CD4-positive, alpha-beta memory T cell (primary cell): ENCODE measurements at regions of chr19 and their contacts with region 1.

Region 1: GRCh38 chr19:19170053-19170872 is at the start of gene MEF2B:
- DNase-seq: peak; percentile 68 to 85 (median 73)
- H3K4me3 ChIP-seq: peak within 1 kb of the TSS in 1 of 2 donors; percentile 5
- H3K4me3 Mint-ChIP-seq: peak within 1 kb of the TSS in 7 of 8 donors; percentile 60 to 82 (median 71)
- H3K27ac ChIP-seq: no peak within 1 kb of the TSS
- H3K27ac Mint-ChIP-seq: peak within 1 kb of the TSS in 6 of 7 donors; percentile 25 to 79 (median 60)
- H3K4me1 ChIP-seq: peaks cover 14% of the 10 kb centered on the region
- H3K4me1 Mint-ChIP-seq: peaks cover 12 to 17% (median 14%) of the 10 kb centered on the region in 4 donors
- H3K27me3 ChIP-seq: no peaks in the 10 kb centered on the region
- H3K27me3 Mint-ChIP-seq: peaks cover 1% of the 10 kb centered on the region in 2 donors
- total RNA-seq, gene MEF2B: 3.1 to 5.2 TPM

Region 2: DNA sequence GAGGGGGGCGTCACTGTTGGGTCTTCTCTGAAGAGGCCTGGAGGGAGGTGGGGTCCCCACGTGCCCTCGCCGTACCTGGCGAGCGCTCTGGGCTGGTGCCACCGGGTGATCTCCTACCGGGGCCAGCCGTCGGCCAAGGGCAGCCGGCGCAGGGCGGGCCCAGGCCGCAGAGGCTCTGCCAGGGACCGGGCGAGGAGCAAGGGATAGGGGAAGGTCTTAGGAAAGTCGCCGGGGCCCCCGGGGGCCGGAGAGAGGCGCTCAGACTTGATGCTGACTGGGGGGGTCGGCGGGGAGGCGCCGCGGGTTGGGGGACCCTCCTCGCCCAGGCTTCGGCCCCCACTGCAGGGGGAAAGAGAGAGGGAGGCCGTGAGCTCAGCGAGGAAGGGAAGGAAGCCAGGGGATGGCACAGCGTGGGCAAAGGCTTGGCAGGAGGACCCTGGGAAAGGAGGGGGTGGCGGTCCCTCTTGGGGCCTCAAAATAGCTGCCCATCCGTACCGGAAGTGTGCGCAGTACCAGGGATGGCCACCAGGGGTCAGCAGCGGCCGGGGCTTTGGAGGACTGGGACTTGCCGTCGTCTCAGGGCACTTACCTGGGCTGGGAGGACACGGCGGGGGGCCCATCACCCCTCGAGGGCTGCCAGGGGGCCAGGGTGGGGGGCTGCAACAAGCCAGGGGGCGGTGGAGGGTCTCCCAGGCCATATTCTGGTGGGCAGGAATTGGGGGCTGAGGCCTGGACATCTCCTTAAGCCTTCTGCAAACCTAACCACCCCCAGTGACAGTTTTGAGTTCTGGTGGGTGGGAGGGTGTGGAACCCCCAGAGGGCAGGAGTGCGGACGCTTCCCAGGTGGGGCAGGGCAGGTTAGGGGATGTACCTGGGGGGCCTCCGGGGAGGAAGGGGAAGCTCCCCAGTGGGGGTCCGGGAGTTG is 24.3 kb before region 1 on chr19:
- CTCF ChIA-PET with region 1: interaction called, 17 read pairs
- POLR2A ChIA-PET with region 1: no interaction called
- intact Hi-C with region 1: loop called (anchors 1 kb)
- DNase-seq: peak; percentile 75 to 85 (median 79)
- H3K4me3 ChIP-seq: no peak overlapping the region
- H3K4me3 Mint-ChIP-seq: no peak overlapping the region
- H3K27ac ChIP-seq: no peak overlapping the region
- H3K27ac Mint-ChIP-seq: no peak overlapping the region
- H3K4me1 ChIP-seq: no peaks in the 10 kb centered on the region
- H3K4me1 Mint-ChIP-seq: no peaks in the 10 kb centered on the region
- H3K27me3 ChIP-seq: no peaks in the 10 kb centered on the region
- H3K27me3 Mint-ChIP-seq: no peaks in the 10 kb centered on the region

Region 3: DNA sequence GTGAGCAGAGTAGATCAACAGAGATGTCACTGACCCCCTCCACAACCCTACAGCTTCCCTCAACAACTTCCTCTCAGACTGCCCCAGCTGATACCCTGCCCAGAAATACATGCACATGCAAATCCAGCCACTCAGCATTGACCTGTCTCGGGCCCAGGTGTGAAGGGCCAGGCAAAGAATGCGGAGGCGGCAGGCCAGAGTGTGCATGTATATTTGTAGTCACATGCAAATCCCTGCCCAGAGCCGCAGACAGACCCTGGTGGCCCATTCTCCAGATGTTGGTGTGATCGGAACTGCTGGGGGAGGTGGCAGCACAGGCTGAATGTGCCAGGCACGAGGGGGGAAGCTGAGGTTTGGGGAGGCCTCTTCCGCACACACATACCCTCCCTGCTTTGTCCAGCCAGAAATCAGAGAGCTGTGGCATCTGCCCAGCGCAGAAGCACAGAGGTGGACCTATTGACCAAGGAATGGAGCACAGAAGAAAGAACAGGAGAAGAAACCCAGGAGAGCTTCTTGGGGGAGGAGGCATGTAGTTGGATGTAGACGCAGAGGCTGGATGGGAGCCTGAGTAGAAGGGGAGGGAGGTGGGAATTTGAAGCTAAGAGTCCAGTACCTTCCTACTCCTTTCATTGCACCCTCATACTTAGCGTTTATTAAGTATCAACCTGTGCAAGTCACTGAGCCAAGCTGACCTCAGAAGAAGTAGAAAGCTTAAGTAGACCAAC is 14.6 kb before region 1 on chr19:
- CTCF ChIA-PET with region 1: interaction called, 25 read pairs
- POLR2A ChIA-PET with region 1: interaction called, 3 read pairs
- intact Hi-C with region 1: no loop called
- DNase-seq: no peak
- H3K4me3 ChIP-seq: no peak overlapping the region
- H3K4me3 Mint-ChIP-seq: no peak overlapping the region
- H3K27ac ChIP-seq: no peak overlapping the region
- H3K27ac Mint-ChIP-seq: no peak overlapping the region
- H3K4me1 ChIP-seq: no peaks in the 10 kb centered on the region
- H3K4me1 Mint-ChIP-seq: no peaks in the 10 kb centered on the region
- H3K27me3 ChIP-seq: no peaks in the 10 kb centered on the region
- H3K27me3 Mint-ChIP-seq: no peaks in the 10 kb centered on the region

Region 4: GRCh38 chr19:19224852-19225494 is 54.7 kb after region 1 on chr19:
- CTCF ChIA-PET with region 1: interaction called, 18 read pairs
- POLR2A ChIA-PET with region 1: no interaction called
- intact Hi-C with region 1: no loop called
- DNase-seq: peak; percentile 74 to 78 (median 76)
- H3K4me3 ChIP-seq: peak overlapping the region in 1 of 2 donors; percentile 49
- H3K4me3 Mint-ChIP-seq: peak overlapping the region; percentile 70 to 93 (median 76)
- H3K27ac ChIP-seq: no peak overlapping the region
- H3K27ac Mint-ChIP-seq: peak overlapping the region in 2 of 7 donors; percentile 10 to 70
- H3K4me1 ChIP-seq: peaks cover 10% of the 10 kb centered on the region
- H3K4me1 Mint-ChIP-seq: peaks cover 0 to 5% (median 2%) of the 10 kb centered on the region in 4 donors
- H3K27me3 ChIP-seq: no peaks in the 10 kb centered on the region
- H3K27me3 Mint-ChIP-seq: peaks cover 8 to 10% of the 10 kb centered on the region in 2 donors